Activated CD4-positive, alpha-beta memory T cell treated with anti-CD3 and anti-CD28 coated beads for 36 hours (primary cell): ENCODE measurements at regions of chr19 and their contacts with region 1.

Region 1: GRCh38 chr19:36378625-36379509 is at the start of gene ZFP14:
- DNase-seq: peak; percentile 97
- H3K4me3 Mint-ChIP-seq: peak within 1 kb of the TSS; percentile 91
- H3K27ac Mint-ChIP-seq: peak within 1 kb of the TSS; percentile 86
- H3K4me1 Mint-ChIP-seq: peaks cover 10% of the 10 kb centered on the region
- H3K27me3 Mint-ChIP-seq: no peaks in the 10 kb centered on the region
- total RNA-seq, gene ZFP14: 1.6 to 2.3 TPM

Region 2: DNA sequence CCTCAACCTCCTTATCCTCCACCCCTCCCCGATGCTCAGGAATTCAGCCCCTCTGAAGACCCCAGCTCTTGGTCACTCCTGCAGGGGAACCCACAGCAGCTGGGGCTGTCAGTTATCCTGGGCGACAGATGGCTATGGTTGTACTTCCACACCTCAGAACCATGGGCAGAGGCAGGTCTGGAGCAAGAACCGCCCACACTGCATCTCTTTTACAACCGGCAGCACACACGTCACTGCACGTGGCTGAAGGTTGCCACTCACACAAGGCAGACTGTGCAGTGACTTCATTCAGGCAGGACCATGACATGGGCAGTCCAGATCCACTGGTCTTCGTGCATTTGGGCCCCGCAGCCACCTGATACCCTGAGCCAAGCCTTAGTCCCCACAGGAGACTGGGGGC is 405.4 kb before region 1 on chr19:
- CTCF ChIA-PET with region 1: no interaction called
- POLR2A ChIA-PET with region 1: no interaction called
- intact Hi-C with region 1: no loop called
- DNase-seq: no peak
- H3K4me3 Mint-ChIP-seq: no peak overlapping the region
- H3K27ac Mint-ChIP-seq: no peak overlapping the region
- H3K4me1 Mint-ChIP-seq: peaks cover 5% of the 10 kb centered on the region
- H3K27me3 Mint-ChIP-seq: peaks cover 6% of the 10 kb centered on the region

Region 3: DNA sequence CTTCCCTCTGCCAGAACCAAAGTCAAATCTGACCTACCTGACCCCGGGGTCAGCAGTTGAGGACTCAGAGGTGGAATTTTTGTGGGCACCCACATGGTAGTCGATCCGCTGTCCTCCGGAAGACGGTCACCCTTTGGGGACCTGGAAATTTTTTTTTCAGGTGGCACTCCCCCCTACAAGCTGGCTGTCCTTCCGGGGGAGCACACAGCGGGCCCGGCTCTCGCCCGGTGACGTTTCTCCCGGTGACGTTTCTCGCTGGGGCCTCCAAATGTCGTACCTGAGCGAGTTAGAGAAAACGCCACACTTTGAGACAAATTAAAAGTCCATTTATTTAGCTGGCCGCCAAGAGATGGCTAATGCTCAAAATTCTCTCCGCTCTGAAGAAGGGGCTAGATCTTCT is 48.7 kb before region 1 on chr19:
- CTCF ChIA-PET with region 1: no interaction called
- POLR2A ChIA-PET with region 1: no interaction called
- intact Hi-C with region 1: no loop called
- DNase-seq: no peak
- H3K4me3 Mint-ChIP-seq: no peak overlapping the region
- H3K27ac Mint-ChIP-seq: no peak overlapping the region
- H3K4me1 Mint-ChIP-seq: peaks cover 3% of the 10 kb centered on the region
- H3K27me3 Mint-ChIP-seq: no peaks in the 10 kb centered on the region

Region 4: GRCh38 chr19:36418287-36419001 is 39.6 kb after region 1 on chr19 and contains the start of gene ZFP82:
- CTCF ChIA-PET with region 1: no interaction called
- POLR2A ChIA-PET with region 1: interaction called, 5 read pairs
- intact Hi-C with region 1: loop called (anchors 5 kb)
- DNase-seq: peak; percentile 83
- H3K4me3 Mint-ChIP-seq: peak within 1 kb of the TSS; percentile 91
- H3K27ac Mint-ChIP-seq: peak within 1 kb of the TSS; percentile 89
- H3K4me1 Mint-ChIP-seq: peaks cover 26% of the 10 kb centered on the region
- H3K27me3 Mint-ChIP-seq: peaks cover 15% of the 10 kb centered on the region
- total RNA-seq, gene ZFP82: 3.7 to 3.9 TPM

Region 5: DNA sequence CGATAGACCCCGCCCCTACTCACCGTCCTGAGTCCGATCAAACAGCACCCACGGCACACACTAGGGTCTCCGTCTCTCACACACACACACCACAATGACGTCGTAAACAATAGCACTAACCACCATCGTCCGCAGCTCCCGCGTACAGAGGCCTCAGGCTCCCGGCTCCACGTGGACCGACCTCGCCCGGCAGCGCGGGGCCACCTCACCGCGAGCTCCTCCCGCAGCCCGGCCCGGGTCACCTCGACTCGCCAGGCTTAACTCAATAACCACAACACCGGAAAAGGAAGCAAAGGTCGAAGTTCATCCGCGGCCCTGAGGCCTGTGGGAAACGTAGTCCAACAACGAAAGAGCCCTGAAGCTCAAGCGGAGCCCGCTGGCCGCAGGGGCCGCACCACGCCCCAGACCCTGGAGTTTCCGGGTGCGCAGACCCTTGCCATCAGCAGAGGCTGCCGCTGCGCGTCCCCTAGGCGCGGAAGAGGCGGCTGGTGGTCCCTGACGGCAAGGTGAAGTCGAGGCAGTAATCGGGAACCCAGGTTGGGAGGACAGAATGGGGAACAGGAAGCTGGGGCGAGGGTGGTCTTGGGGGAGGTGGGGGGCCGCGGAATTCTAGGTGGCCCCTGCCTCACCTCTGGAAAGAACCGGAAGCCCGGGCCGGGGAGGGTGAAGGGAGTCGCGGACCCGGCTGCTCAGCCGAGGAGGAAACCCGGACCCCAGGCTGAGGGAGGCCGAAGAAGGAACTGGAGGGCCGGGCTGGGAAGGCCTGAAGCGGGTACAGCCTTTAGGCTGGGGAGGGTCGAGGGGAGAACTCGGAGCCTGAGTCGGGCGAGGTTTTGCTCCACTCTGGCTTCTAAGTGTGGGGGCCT is 194.4 kb after region 1 on chr19 and contains the start of gene ZNF529:
- CTCF ChIA-PET with region 1: no interaction called
- POLR2A ChIA-PET with region 1: no interaction called
- intact Hi-C with region 1: loop called (anchors 5 kb)
- DNase-seq: peak; percentile 92
- H3K4me3 Mint-ChIP-seq: peak within 1 kb of the TSS; percentile 87
- H3K27ac Mint-ChIP-seq: peak within 1 kb of the TSS; percentile 92
- H3K4me1 Mint-ChIP-seq: peaks cover 32% of the 10 kb centered on the region
- H3K27me3 Mint-ChIP-seq: no peaks in the 10 kb centered on the region
- total RNA-seq, gene ZNF529: 14.3 to 15.4 TPM

Region 6: DNA sequence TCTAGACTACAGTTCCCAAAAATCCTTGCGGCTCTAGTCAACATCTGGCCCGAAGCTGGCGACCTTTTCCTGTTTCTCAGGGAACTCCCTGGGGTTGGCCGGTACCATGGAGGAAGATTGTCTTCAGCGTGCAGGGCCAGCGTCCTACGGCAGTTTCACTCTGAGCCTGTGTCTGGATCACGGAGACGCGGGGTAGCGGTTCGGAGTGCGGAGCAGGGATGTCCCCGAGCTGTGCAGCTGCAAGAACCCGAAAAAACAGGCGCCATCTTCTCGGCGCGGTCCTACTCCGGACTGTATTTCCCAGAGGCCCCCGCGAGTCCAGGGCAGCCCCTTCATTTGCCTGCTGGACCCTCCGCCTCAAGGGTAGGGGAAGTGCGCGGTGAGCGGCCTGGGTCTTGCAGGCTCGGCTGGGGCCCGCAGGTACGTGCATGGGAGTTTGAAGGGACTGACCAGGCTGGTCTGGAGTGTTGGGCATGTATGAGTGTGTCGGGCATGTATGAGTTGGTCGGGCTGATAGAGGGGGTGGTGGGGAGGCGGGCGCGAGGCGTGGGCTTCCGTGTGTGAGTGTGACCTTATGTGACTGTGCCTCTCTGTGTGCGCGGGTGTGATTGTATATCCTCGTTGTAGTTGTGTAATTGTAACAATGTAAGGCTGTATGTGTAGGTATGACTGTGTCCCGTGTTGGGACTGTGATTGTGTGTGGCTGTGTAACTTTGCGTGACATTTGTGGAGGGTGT is 839.2 kb after region 1 on chr19 and contains the start of gene ZNF383:
- CTCF ChIA-PET with region 1: no interaction called
- POLR2A ChIA-PET with region 1: no interaction called
- intact Hi-C with region 1: loop called (anchors 10 kb)
- DNase-seq: peak; percentile 90
- H3K4me3 Mint-ChIP-seq: peak within 1 kb of the TSS; percentile 99
- H3K27ac Mint-ChIP-seq: peak within 1 kb of the TSS; percentile 99
- H3K4me1 Mint-ChIP-seq: peaks cover 19% of the 10 kb centered on the region
- H3K27me3 Mint-ChIP-seq: no peaks in the 10 kb centered on the region
- total RNA-seq, gene ZNF383: 7.7 TPM